ENCODE measurements at regions of chr9 and their contacts with region 1.

Region 1: GRCh38 chr9:112379177-112380101 is 469 bp upstream of the HSDL2 start:
- DNase-seq: peak; percentile 93 to 96 (median 94)
- H3K4me3 ChIP-seq: peak overlapping the region; percentile 90 to 96
- H3K4me3 Mint-ChIP-seq: peak overlapping the region; percentile 97 to 100 (median 100)
- H3K27ac ChIP-seq: peak overlapping the region; percentile 91
- H3K27ac Mint-ChIP-seq: peak overlapping the region; percentile 93 to 100 (median 99)
- H3K4me1 ChIP-seq: peaks cover 23% of the 10 kb centered on the region
- H3K4me1 Mint-ChIP-seq: peaks cover 32 to 65% (median 45%) of the 10 kb centered on the region in 4 donors
- H3K27me3 ChIP-seq: no peaks in the 10 kb centered on the region
- H3K27me3 Mint-ChIP-seq: no peaks in the 10 kb centered on the region

Region 2: DNA sequence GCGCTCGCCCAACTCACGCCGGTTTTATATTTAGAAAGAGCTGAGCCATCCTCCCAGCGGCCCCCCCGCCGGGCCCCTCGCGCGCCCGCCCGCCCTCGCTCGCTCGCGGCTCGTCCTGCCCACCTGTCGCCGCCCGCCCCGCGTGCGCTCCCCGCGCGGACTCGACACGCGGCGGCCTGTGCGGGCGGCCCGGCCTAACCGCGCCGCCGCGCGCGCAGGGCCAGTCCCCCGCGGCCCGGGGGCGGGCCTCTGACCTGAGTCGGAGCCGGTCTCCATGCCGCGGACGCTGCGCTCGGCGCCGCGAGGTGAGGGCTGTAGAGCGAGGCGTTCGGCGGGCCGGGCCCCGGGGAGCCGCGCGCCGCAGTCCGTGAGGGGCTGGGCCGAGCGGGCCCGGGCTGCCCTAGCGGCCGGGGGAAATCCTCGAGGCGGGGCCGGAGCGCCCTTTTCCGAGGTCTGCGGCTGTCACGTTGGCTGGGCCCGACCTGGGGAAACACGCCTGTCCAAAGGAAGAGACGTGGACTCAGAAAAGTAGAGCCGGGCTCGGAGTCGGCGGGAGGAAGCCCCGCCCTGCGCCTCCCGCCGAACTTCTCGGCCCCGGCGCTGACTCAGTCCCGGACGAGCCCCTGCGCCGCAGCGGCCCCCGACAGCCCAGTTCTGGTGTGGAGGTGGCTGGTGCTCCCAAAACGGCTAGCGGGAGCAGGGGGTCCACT is 895.4 kb before region 1 on chr9 and contains the start of gene ECPAS:
- CTCF ChIA-PET with region 1: no interaction called
- POLR2A ChIA-PET with region 1: interaction called, 11 read pairs
- intact Hi-C with region 1: loop called (anchors 5 kb)
- DNase-seq: peak; percentile 66 to 72 (median 71)
- H3K4me3 ChIP-seq: peak within 1 kb of the TSS; percentile 69 to 89
- H3K4me3 Mint-ChIP-seq: peak within 1 kb of the TSS; percentile 81 to 90 (median 86)
- H3K27ac ChIP-seq: peak within 1 kb of the TSS; percentile 83
- H3K27ac Mint-ChIP-seq: peak within 1 kb of the TSS; percentile 86 to 93 (median 89)
- H3K4me1 ChIP-seq: peaks cover 11% of the 10 kb centered on the region
- H3K4me1 Mint-ChIP-seq: peaks cover 23 to 37% (median 28%) of the 10 kb centered on the region in 4 donors
- H3K27me3 ChIP-seq: no peaks in the 10 kb centered on the region
- H3K27me3 Mint-ChIP-seq: no peaks in the 10 kb centered on the region
- total RNA-seq, gene ECPAS: 77.6 to 80.3 TPM

Region 3: DNA sequence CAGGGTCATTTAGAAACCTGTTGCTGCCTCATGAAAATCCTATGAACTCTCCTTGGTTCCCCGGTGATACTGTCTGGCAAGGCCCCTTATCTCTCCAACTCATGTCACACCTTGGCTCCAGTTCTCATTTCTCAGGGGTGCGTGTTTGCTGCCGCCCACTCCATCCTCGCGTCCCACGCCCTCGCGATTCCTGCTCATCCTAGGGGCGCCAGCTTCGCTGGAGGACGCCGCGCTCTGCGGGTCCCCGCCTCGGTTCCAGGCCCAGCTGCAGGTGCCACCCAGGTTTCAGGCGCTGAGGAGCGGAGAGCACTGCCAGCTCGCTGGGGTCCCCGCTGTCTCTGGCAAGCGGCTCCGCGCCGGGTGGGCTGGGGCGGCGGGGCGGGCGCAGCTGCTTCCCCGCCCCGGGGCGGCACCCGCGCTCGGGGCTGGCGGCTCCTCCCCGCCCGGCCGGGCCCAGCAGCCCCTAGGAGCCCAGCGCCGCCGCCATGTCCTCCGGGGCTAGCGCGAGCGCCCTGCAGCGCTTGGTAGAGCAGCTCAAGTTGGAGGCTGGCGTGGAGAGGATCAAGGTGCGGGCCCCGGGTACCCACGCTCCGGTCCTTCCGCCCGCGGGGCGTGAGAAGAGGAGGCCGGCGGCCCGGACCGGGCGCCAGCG is 718.2 kb before region 1 on chr9 and contains the start of gene GNG10:
- CTCF ChIA-PET with region 1: no interaction called
- POLR2A ChIA-PET with region 1: interaction called, 13 read pairs
- intact Hi-C with region 1: no loop called
- DNase-seq: peak; percentile 66 to 73 (median 71)
- H3K4me3 ChIP-seq: peak within 1 kb of the TSS; percentile 76 to 77
- H3K4me3 Mint-ChIP-seq: peak within 1 kb of the TSS; percentile 91 to 97 (median 94)
- H3K27ac ChIP-seq: peak within 1 kb of the TSS; percentile 65
- H3K27ac Mint-ChIP-seq: peak within 1 kb of the TSS; percentile 68 to 98 (median 94)
- H3K4me1 ChIP-seq: peaks cover 36% of the 10 kb centered on the region
- H3K4me1 Mint-ChIP-seq: peaks cover 21 to 44% (median 31%) of the 10 kb centered on the region in 4 donors
- H3K27me3 ChIP-seq: no peaks in the 10 kb centered on the region
- H3K27me3 Mint-ChIP-seq: no peaks in the 10 kb centered on the region
- total RNA-seq, gene GNG10: 9.8 to 12.4 TPM

Region 4: DNA sequence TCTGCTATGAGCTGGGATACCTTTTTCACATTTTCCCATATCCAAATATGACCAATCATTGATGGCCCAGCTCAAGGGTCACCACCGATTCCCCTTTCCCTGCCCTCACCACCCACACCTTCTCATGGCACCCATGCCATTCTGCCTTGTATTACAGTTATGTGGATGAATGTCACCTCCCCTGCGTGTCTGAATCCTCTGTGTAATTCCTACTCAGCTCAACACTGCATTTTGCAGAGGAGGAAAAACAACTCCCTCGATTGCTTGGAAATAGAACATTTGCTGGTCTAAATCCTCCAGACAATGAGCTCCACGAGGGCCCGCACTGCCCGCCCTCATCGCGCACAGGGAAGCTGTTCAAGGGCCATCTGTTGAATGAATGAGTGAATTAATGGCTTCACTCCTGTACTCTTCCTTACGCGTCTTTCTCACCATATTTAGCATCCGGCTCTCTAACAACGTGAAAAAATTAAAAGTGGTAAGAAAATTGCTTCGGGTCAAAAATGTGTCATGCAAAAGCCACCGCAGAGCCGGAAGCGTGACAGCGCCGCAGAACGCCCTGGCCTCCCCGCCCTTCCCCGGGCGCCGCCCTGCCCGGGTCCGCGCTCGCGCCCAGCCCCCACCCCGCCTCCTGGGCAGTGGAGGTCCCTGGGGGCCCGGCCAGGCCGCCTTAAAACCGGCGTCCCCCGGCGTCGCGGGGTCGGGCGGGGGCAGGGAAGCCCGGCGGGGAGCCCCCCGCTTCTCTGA is 205.0 kb before region 1 on chr9:
- CTCF ChIA-PET with region 1: interaction called, 5 read pairs
- POLR2A ChIA-PET with region 1: interaction called, 10 read pairs
- intact Hi-C with region 1: loop called (anchors 2 kb)
- DNase-seq: peak; percentile 75 to 83 (median 80)
- H3K4me3 ChIP-seq: peak overlapping the region; percentile 54 to 68
- H3K4me3 Mint-ChIP-seq: peak overlapping the region; percentile 88 to 96 (median 91)
- H3K27ac ChIP-seq: peak overlapping the region; percentile 19
- H3K27ac Mint-ChIP-seq: peak overlapping the region; percentile 82 to 97 (median 95)
- H3K4me1 ChIP-seq: peaks cover 64% of the 10 kb centered on the region
- H3K4me1 Mint-ChIP-seq: peaks cover 49 to 88% (median 69%) of the 10 kb centered on the region in 4 donors
- H3K27me3 ChIP-seq: no peaks in the 10 kb centered on the region
- H3K27me3 Mint-ChIP-seq: no peaks in the 10 kb centered on the region

Region 5: DNA sequence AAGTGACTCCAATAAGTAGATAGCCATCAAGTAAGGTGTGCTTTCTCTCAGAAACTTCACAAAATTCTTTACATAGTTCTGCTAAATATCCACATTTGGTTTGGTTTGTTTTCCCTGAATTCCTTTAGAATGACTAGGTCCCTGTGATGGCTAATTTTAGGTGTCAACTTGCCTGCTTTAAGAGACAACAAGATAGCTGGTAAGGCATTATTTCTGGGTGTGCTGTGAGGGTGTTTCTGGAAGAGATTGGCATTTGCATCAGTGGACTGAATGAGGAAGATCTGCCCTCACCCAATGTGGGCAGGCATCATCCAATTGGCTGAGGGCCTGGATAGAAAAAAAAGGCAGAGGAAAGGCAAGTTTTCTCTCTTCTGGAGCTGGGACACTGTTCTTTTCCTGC is 37.7 kb before region 1 on chr9:
- CTCF ChIA-PET with region 1: no interaction called
- POLR2A ChIA-PET with region 1: no interaction called
- intact Hi-C with region 1: no loop called
- DNase-seq: no peak
- H3K4me3 ChIP-seq: no peak overlapping the region
- H3K4me3 Mint-ChIP-seq: no peak overlapping the region
- H3K27ac ChIP-seq: no peak overlapping the region
- H3K27ac Mint-ChIP-seq: no peak overlapping the region
- H3K4me1 ChIP-seq: no peaks in the 10 kb centered on the region
- H3K4me1 Mint-ChIP-seq: no peaks in the 10 kb centered on the region
- H3K27me3 ChIP-seq: no peaks in the 10 kb centered on the region
- H3K27me3 Mint-ChIP-seq: peaks cover 0 to 2% of the 10 kb centered on the region in 2 donors

Region 6: DNA sequence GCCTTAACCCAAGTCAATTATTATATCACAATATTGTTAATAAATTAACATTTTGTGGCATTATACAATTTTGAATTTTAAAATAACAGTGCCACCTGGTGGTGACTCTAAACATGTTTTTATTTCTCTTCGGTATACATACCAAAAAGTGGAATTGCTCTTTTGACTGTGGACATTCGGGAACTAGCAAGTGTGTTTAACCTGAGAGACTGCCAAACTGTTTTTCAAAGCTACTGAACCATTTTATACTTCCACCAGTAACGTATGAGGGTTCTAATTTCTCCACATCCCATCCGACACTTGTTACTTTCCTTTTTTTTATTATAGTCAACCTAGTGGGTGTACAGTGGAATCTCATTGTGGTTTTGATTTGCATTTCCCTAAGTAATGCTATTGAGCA is 17.8 kb before region 1 on chr9:
- CTCF ChIA-PET with region 1: interaction called, 18 read pairs
- POLR2A ChIA-PET with region 1: interaction called, 8 read pairs
- intact Hi-C with region 1: no loop called
- DNase-seq: peak in 4 of 5 donors; percentile 42 to 48 (median 46)
- H3K4me3 ChIP-seq: no peak overlapping the region
- H3K4me3 Mint-ChIP-seq: no peak overlapping the region
- H3K27ac ChIP-seq: no peak overlapping the region
- H3K27ac Mint-ChIP-seq: no peak overlapping the region
- H3K4me1 ChIP-seq: no peaks in the 10 kb centered on the region
- H3K4me1 Mint-ChIP-seq: peaks cover 0 to 2% (median 1%) of the 10 kb centered on the region in 4 donors
- H3K27me3 ChIP-seq: no peaks in the 10 kb centered on the region
- H3K27me3 Mint-ChIP-seq: peaks cover 2 to 5% of the 10 kb centered on the region in 2 donors

Region 7: GRCh38 chr9:112520656-112521055 is 141.2 kb after region 1 on chr9:
- CTCF ChIA-PET with region 1: no interaction called
- POLR2A ChIA-PET with region 1: no interaction called
- intact Hi-C with region 1: no loop called
- DNase-seq: no peak
- H3K4me3 ChIP-seq: no peak overlapping the region
- H3K4me3 Mint-ChIP-seq: no peak overlapping the region
- H3K27ac ChIP-seq: no peak overlapping the region
- H3K27ac Mint-ChIP-seq: no peak overlapping the region
- H3K4me1 ChIP-seq: no peaks in the 10 kb centered on the region
- H3K4me1 Mint-ChIP-seq: no peaks in the 10 kb centered on the region
- H3K27me3 ChIP-seq: no peaks in the 10 kb centered on the region
- H3K27me3 Mint-ChIP-seq: peaks cover 0 to 2% of the 10 kb centered on the region in 2 donors

Region 8: DNA sequence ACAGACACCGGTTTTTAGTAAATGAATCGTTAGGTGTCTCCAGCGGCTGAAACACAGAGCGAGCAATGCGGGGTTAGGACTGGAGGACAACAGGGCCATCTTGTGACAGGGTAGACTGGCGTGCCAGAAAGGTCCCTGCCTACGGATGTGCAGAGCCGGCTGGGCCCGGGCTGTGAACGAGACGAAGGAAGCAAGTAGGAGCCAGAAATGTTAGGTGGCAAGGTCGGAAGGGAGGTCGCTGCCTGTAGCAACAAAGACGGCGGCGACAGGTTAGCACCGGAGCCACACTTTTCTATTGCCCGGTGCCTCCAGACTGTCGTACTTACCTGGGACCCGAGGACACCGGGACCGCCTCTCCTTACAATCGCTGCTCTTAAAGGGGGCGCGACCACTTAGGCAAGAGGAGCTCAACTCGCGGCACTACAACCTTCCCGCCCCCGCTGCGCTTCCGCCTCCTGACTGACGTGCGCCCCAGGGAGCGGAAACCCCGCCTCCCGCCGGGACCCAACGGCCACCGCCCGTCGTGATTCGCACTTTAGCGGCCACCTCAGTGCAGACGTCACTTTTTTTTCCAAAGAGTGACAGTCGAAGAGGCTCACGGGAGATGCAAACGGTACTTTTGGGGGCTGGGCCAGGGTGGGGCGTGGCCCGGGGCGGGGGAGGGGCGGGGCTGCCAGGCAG is 338.4 kb after region 1 on chr9 and contains the start of gene INIP:
- CTCF ChIA-PET with region 1: interaction called, 3 read pairs
- POLR2A ChIA-PET with region 1: interaction called, 5 read pairs
- intact Hi-C with region 1: loop called (anchors 1 kb)
- DNase-seq: peak; percentile 97 to 98 (median 98)
- H3K4me3 ChIP-seq: peak within 1 kb of the TSS; percentile 78 to 95
- H3K4me3 Mint-ChIP-seq: peak within 1 kb of the TSS; percentile 93 to 99 (median 98)
- H3K27ac ChIP-seq: peak within 1 kb of the TSS; percentile 88
- H3K27ac Mint-ChIP-seq: peak within 1 kb of the TSS; percentile 94 to 99 (median 99)
- H3K4me1 ChIP-seq: peaks cover 25% of the 10 kb centered on the region
- H3K4me1 Mint-ChIP-seq: peaks cover 15 to 37% (median 26%) of the 10 kb centered on the region in 4 donors
- H3K27me3 ChIP-seq: no peaks in the 10 kb centered on the region
- H3K27me3 Mint-ChIP-seq: no peaks in the 10 kb centered on the region
- total RNA-seq, gene INIP: 25.2 to 33.4 TPM

Region 9: DNA sequence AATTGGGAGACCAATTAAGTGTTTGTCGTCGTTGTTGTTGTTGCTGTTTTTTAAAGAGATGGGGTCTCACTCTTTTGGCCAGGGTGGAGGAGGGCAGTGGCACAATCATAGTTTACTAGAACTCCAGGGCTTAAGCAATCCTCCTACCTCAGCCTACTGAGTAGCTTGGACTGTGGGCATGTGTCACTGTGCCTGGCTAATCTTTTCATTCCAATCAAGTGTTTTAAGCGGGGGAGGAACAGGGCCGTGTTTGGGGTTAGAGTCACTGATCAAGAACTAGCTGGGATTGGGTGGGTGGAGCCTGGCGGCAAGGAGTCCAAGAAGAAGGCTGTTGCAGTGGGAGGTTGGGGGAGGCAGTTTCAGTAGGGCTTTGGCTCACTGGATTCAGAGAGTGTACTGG is 384.9 kb after region 1 on chr9:
- CTCF ChIA-PET with region 1: no interaction called
- POLR2A ChIA-PET with region 1: no interaction called
- intact Hi-C with region 1: no loop called
- DNase-seq: no peak
- H3K4me3 ChIP-seq: no peak overlapping the region
- H3K4me3 Mint-ChIP-seq: no peak overlapping the region
- H3K27ac ChIP-seq: no peak overlapping the region
- H3K27ac Mint-ChIP-seq: peak overlapping the region in 4 of 7 donors; percentile 1 to 55 (median 16)
- H3K4me1 ChIP-seq: peaks cover 5% of the 10 kb centered on the region
- H3K4me1 Mint-ChIP-seq: peaks cover 19 to 50% (median 40%) of the 10 kb centered on the region in 4 donors
- H3K27me3 ChIP-seq: no peaks in the 10 kb centered on the region
- H3K27me3 Mint-ChIP-seq: no peaks in the 10 kb centered on the region

Region 10: GRCh38 chr9:112793213-112793810 is 413.9 kb after region 1 on chr9:
- CTCF ChIA-PET with region 1: interaction called, 12 read pairs
- POLR2A ChIA-PET with region 1: no interaction called
- intact Hi-C with region 1: no loop called
- DNase-seq: peak; percentile 70 to 78 (median 75)
- H3K4me3 ChIP-seq: no peak overlapping the region
- H3K4me3 Mint-ChIP-seq: no peak overlapping the region
- H3K27ac ChIP-seq: no peak overlapping the region
- H3K27ac Mint-ChIP-seq: peak overlapping the region in 4 of 7 donors; percentile 9 to 47 (median 37)
- H3K4me1 ChIP-seq: peaks cover 6% of the 10 kb centered on the region
- H3K4me1 Mint-ChIP-seq: peaks cover 9 to 34% (median 20%) of the 10 kb centered on the region in 4 donors
- H3K27me3 ChIP-seq: no peaks in the 10 kb centered on the region
- H3K27me3 Mint-ChIP-seq: no peaks in the 10 kb centered on the region

Region 11: GRCh38 chr9:112914514-112914913 is 535.1 kb after region 1 on chr9:
- CTCF ChIA-PET with region 1: no interaction called
- POLR2A ChIA-PET with region 1: no interaction called
- intact Hi-C with region 1: no loop called
- DNase-seq: no peak
- H3K4me3 ChIP-seq: no peak overlapping the region
- H3K4me3 Mint-ChIP-seq: no peak overlapping the region
- H3K27ac ChIP-seq: no peak overlapping the region
- H3K27ac Mint-ChIP-seq: no peak overlapping the region
- H3K4me1 ChIP-seq: no peaks in the 10 kb centered on the region
- H3K4me1 Mint-ChIP-seq: no peaks in the 10 kb centered on the region
- H3K27me3 ChIP-seq: no peaks in the 10 kb centered on the region
- H3K27me3 Mint-ChIP-seq: peaks cover 2% of the 10 kb centered on the region in 2 donors